Vagina (tissue), 2 donors: ENCODE measurements at regions of chr12 and their contacts with region 1.

Region 1: DNA sequence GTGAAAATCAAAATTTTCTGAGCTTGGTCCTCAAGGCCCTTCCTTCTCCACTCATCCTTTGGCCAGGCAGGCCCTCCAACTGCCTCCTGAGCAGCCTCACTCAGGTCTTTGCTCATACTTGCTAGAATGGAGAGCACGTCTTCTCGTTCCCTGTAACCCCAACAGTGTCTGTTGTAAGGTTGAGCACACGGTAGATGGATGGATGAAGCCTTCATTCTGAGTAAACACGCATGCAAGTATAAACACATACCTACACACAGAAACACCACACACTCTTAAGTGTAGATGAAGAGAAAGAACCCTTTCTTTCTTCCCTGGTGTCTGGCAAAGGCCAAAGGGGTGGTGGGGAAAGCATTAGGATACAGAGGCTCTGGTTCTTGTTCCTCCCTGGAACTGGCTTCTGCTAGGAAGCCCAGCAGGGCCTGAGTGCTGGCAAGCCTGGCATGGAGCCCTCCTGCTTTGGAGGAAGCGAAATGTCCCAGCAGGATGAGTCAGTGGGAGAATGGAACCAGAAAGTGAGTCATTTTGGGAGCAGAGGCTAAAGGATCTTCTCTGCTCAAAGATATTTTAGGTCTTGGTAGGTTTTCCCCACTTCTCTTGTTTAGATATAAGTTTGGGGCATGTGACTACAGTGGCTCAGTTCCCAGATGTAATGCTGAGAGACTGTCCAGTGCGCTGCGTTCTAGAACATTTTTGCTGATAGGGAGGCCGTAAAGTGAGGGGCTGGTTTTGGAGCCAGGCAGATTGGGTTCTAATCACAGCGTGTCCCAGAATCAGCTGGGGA is 127.4 kb downstream of the CACNA1C start:
- DNase-seq: no peak
- H3K4me3 ChIP-seq: no peak overlapping the region
- H3K27ac ChIP-seq: peak overlapping the region; percentile 79
- H3K4me1 ChIP-seq: peaks cover 41% of the 10 kb centered on the region
- H3K27me3 ChIP-seq: no peaks in the 10 kb centered on the region
- CTCF ChIP-seq: no peak
- POLR2A ChIP-seq: no peak

Region 2: GRCh38 chr12:868722-869121 is 1311.4 kb before region 1 on chr12:
- intact Hi-C with region 1: no loop called
- DNase-seq: no peak
- H3K4me3 ChIP-seq: no peak overlapping the region
- H3K27ac ChIP-seq: no peak overlapping the region
- H3K4me1 ChIP-seq: no peaks in the 10 kb centered on the region
- H3K27me3 ChIP-seq: no peaks in the 10 kb centered on the region
- CTCF ChIP-seq: no peak
- POLR2A ChIP-seq: no peak

Region 3: DNA sequence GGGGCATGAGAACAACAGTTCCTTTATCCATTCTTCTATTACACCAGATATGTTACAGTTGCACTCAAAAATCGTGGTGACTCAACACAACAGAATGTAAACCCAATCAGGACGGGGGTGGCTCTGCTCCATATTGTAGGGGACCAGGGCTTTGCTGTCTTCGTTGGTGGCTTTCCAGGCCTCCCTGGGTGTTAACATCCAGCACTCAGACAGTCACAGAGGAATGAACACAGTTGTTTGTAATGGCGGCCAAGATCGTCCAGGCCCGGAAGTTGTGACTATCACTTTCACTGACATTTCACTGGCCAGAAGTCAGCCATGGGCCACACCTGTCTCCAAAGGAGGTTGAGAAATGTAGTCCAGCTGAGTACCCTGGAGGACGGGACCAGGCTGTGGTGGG is 76.8 kb after region 1 on chr12:
- intact Hi-C with region 1: loop called (anchors 10 kb)
- DNase-seq: no peak
- H3K4me3 ChIP-seq: no peak overlapping the region
- H3K27ac ChIP-seq: no peak overlapping the region
- H3K4me1 ChIP-seq: no peaks in the 10 kb centered on the region
- H3K27me3 ChIP-seq: no peaks in the 10 kb centered on the region
- CTCF ChIP-seq: no peak
- POLR2A ChIP-seq: no peak

Region 4: DNA sequence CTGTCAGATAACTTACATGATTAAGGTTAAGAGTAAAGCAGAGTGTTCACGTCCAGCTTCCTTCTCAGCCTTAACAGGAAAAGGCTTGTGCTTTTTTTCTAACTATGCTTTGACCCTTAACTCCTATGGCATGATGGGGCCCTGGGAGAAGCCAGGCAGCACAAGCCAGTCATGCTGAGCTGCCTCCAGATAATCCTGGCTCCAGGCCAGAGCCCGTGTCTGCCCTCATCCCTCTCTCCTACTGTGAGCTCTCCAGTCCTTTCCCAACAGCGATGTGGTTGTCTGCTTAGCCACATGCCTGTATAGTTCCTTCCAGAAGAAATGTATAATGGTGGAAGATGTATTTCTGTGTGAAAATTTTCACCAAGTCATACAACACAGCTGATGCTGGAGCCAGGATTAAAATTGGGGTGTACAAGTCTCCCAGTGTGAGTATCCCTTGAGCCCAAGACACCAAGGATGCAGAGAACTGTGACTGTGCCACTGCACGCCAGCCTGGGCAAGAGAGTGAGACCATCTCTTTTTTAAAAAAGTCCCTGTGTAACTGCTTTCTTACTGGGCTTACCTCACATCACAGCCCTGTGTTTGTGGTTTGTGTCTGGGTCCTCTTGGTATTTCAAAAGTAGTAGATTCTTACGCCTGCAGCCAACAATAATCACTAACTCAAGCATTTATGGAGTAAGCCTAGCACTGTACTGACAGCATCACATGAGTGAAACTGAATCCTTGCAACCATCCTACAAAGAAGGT is 624.4 kb after region 1 on chr12:
- intact Hi-C with region 1: no loop called
- DNase-seq: no peak
- H3K4me3 ChIP-seq: no peak overlapping the region
- H3K27ac ChIP-seq: no peak overlapping the region
- H3K4me1 ChIP-seq: peaks cover 19% of the 10 kb centered on the region
- H3K27me3 ChIP-seq: no peaks in the 10 kb centered on the region
- CTCF ChIP-seq: no peak
- POLR2A ChIP-seq: no peak